ENCODE measurements at regions of chr19 and their contacts with region 1.

Region 1: DNA sequence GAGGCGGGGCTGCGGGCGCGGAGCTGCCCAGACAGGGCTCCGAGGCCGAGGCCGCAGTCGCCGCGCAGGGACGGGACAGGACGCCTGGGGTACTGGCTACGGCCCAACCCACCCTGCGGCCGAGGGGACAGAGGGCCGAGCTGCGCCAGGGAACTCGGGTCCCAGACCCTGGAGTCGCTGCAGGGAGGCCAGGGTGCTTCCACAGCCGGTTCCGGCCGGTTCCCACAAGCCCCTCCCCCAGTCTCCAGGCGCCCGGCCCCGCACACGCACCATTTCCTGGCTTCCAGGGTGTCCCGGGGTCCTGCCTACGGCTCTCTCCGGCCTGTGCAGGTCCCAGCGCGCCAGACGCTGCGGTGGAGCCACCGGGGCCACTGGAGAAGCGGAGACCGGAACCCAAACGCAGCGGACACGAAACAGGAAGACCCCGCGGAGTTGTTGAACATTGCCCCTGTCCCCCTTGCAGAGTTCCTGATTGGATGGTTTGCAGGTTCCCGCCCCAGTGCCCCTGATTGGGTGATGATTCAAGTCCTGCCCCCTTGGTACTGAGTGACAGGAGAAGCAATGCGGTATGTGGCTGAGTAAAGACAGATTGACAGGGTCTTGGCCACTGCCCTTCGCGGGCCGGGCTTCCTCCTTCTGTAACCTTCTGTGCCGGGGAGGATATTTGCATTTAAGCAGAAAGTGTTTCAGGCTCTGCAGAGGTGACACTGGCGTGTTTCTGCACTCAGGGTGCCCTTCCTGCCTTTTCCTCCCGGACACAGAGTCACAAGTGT is at the start of gene ZNF564:
- DNase-seq: peak; percentile 98
- H3K4me3 Mint-ChIP-seq: peak within 1 kb of the TSS; percentile 95
- H3K27ac Mint-ChIP-seq: peak within 1 kb of the TSS; percentile 96
- H3K4me1 Mint-ChIP-seq: peaks cover 23% of the 10 kb centered on the region
- H3K27me3 Mint-ChIP-seq: no peaks in the 10 kb centered on the region
- total RNA-seq, gene ZNF564: 5.6 and 7.0 TPM in 2 replicates

Region 2: GRCh38 chr19:12527034-12527836 is 24.0 kb before region 1 on chr19:
- intact Hi-C with region 1: no loop called
- DNase-seq: peak; percentile 59
- H3K4me3 Mint-ChIP-seq: no peak overlapping the region
- H3K27ac Mint-ChIP-seq: no peak overlapping the region
- H3K4me1 Mint-ChIP-seq: no peaks in the 10 kb centered on the region
- H3K27me3 Mint-ChIP-seq: no peaks in the 10 kb centered on the region

Region 3: DNA sequence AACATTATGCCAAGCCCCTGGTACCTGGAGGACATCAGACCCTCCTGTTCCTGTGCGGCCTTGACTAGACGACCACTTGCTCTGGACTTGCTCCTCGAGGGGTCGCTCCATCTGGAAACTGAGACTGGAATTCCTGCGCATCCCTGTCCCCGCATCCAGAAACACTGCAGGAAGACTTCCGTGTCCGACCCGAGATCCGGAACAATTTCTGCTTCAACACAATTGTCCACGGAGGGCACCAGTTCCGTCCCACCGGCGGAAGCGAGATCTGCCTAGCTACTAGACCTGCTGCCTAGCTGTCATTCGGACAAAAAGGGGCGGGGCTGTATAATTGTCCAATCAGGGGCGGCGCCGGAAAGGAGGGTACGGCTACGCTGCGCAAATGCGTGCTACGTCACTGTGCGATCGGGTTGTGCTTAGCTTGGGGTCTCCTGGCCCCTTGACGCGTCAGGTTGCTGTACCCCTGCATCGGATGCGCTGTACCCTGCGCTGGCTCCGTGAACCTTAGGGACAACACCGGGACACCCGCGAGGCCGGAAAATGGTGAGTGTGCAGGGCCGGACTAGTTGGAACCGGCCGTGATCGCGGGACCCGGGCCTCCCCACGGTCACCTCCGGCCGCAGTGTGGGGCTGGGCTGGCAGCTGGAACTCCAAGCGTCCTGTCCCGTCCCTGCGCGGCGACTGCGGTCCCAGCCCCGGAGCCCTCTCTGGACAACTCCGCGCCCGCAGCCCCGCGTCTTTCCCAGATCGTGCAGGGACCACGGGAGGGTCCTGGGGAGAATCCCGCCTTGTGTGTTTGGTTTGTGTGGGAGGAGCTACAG is 59.5 kb after region 1 on chr19 and contains the starts of genes ZNF490 and ZNF791:
- intact Hi-C with region 1: loop called (anchors 2 kb)
- DNase-seq: peak; percentile 99
- H3K4me3 Mint-ChIP-seq: peak within 1 kb of the TSS; percentile 100
- H3K27ac Mint-ChIP-seq: peak within 1 kb of the TSS; percentile 99
- H3K4me1 Mint-ChIP-seq: peaks cover 20% of the 10 kb centered on the region
- H3K27me3 Mint-ChIP-seq: no peaks in the 10 kb centered on the region
- total RNA-seq, gene ZNF490: 8.7 and 9.0 TPM in 2 replicates
- total RNA-seq, gene ZNF791: 22.3 and 26.6 TPM in 2 replicates